Activated naive CD4-positive, alpha-beta T cell treated with anti-CD3 and anti-CD28 coated beads for 36 hours (primary cell): ENCODE measurements at regions of chr1 and their contacts with region 1.

Region 1: DNA sequence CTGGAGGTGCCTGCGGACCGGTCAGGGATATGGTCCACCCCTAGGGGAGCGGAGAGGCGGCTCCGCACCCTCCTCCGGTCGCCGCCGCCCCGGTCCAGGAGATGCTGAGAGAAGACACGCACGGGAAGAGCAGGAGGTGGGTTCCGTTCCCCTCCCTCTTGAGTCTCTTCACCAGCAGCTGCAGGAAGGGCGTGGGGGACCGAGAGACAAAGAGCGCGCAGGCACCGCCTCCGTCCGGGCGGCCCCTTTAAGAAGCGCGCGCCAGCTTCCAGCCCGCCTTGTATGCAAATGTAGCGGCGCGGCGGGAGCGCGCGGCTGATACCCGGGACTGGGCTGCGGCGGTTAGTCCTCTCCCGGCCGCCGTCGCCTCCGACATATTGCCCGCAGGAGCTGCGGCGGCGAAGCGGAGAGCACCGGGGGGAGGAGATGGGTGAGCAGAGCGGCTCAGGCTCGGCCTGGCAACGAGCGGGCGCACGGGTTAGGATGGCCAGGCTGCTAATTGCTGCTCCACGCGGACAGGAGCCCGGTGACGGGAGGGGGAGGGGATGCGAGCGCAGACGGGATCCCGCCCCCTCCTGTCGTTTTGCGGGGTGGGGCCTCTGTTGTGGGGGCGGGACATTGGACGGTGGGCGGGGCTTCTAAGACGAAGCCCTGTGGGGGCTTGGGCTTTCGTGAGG is at the start of gene TMEM39B:
- DNase-seq: peak; percentile 95
- H3K4me3 Mint-ChIP-seq: peak within 1 kb of the TSS; percentile 87
- H3K27ac Mint-ChIP-seq: peak within 1 kb of the TSS; percentile 85
- H3K4me1 Mint-ChIP-seq: peaks cover 32% of the 10 kb centered on the region
- H3K27me3 Mint-ChIP-seq: no peaks in the 10 kb centered on the region
- total RNA-seq, gene TMEM39B: 17.2 to 17.6 TPM

Region 2: GRCh38 chr1:31762726-31763670 is 309.8 kb before region 1 on chr1:
- CTCF ChIA-PET with region 1: no interaction called
- intact Hi-C with region 1: loop called (anchors 5 kb)
- DNase-seq: peak; percentile 80
- H3K4me3 Mint-ChIP-seq: peak overlapping the region; percentile 67
- H3K27ac Mint-ChIP-seq: no peak overlapping the region
- H3K4me1 Mint-ChIP-seq: peaks cover 20% of the 10 kb centered on the region
- H3K27me3 Mint-ChIP-seq: peaks cover 18% of the 10 kb centered on the region

Region 3: DNA sequence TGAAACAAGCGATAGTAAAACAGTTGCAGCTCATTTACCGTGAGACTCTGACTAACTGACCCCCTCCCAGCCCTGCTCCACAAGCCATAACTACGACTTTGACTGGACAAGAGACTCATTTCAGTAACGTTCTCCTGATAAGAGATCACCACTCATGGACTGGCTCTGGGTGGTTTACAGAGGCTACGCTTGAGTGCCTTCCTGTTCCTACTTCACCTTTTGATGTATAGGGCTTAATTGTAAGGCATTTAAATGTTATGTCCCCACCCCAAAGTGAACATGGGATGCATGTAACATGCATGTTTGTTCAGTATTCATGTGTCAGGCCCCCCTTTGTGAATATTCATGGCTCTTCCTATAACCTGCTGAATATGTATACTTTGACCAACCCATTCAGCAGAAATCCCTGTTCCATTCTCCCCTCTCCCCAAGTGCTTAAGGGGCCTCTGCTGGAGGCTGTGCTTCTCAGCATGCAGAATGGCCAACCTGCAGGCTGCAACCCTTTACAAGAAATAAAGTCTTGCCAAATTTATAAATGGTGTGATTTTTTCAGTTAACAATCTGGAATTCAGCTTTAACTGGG is 206.2 kb before region 1 on chr1:
- CTCF ChIA-PET with region 1: no interaction called
- intact Hi-C with region 1: no loop called
- DNase-seq: no peak
- H3K4me3 Mint-ChIP-seq: no peak overlapping the region
- H3K27ac Mint-ChIP-seq: no peak overlapping the region
- H3K4me1 Mint-ChIP-seq: peaks cover 10% of the 10 kb centered on the region
- H3K27me3 Mint-ChIP-seq: no peaks in the 10 kb centered on the region

Region 4: DNA sequence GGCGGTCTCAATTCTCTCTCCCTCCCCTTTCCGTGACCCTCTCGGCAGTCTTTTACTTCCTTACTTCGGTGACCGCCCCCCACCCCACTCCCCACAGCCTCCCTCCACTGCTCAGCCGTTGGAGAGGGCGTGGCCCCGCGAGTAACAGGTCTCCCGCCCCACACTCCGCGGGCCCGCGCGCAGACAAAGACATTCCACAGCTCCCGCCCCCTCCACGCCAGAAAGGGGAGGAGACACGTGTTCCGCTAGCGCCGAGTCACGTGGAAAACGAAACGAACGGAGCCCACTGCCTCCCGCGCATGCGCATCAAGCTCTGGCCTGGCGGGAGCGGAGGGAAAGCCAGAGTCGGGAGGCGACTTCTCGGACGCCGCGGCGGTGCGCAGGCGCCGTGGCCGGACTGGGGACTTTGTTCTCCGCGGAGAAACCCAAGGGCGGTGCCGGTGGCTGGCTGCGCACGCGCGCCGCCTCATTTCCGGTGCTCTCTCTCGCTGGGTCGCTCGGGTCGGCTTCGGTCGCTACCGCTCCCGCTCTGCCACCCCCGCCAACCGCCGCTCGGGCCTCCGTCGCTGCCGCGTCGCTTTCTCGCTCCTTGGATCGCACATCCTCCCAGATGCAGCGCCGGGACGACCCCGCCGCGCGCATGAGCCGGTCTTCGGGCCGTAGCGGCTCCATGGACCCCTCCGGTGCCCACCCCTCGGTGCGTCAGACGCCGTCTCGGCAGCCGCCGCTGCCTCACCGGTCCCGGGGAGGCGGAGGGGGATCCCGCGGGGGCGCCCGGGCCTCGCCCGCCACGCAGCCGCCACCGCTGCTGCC is 59.2 kb before region 1 on chr1 and contains the start of gene KHDRBS1:
- CTCF ChIA-PET with region 1: no interaction called
- intact Hi-C with region 1: loop called (anchors 1 kb)
- DNase-seq: peak; percentile 98
- H3K4me3 Mint-ChIP-seq: peak within 1 kb of the TSS; percentile 94
- H3K27ac Mint-ChIP-seq: peak within 1 kb of the TSS; percentile 94
- H3K4me1 Mint-ChIP-seq: peaks cover 33% of the 10 kb centered on the region
- H3K27me3 Mint-ChIP-seq: no peaks in the 10 kb centered on the region
- total RNA-seq, gene KHDRBS1: 189 to 198 TPM

Region 5: GRCh38 chr1:32179443-32180185 is 106.9 kb after region 1 on chr1 and contains the start of gene TXLNA:
- CTCF ChIA-PET with region 1: no interaction called
- intact Hi-C with region 1: loop called (anchors 1 kb)
- DNase-seq: peak; percentile 94
- H3K4me3 Mint-ChIP-seq: peak within 1 kb of the TSS; percentile 86
- H3K27ac Mint-ChIP-seq: peak within 1 kb of the TSS; percentile 96
- H3K4me1 Mint-ChIP-seq: peaks cover 47% of the 10 kb centered on the region
- H3K27me3 Mint-ChIP-seq: no peaks in the 10 kb centered on the region
- total RNA-seq, gene TXLNA: 84.3 to 86.2 TPM

Region 6: DNA sequence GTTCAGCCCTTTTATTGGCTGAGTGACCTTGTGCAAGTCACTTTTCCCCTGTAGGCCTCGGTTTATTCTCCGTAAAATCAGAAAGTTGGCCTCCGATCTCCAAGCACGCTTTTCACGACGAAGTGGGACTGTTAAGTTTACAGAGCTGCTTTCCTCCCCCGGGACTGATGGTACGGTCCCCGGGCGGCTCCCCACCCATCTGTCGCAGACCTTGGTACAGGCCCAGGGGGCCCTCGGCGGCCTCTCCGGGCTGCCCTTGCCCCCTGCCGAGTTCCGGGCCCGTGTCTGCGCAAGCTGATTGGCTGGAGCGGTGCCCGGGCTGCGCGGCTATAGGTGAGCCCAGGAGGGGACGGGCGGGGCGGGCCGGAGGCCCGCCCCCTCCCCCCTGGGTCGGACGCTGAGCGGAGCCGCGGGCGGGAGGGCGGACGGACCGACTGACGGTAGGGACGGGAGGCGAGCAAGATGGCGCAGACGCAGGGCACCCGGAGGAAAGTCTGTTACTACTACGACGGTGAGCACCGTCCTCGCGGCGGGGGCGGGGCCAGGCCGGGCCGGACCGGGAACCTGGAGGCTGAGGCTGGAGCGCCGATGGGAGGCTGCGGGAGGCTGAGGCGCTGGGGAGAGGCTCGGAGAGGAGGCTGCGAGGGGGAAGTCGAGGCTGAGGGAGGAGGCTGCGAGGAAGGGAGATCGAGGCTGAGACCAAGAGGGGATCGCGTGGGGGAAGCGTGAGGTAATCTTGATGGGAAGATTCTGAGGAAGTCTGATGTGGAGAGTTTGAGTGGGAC is 219.1 kb after region 1 on chr1 and contains the start of gene HDAC1:
- CTCF ChIA-PET with region 1: no interaction called
- intact Hi-C with region 1: loop called (anchors 2 kb)
- DNase-seq: peak; percentile 97
- H3K4me3 Mint-ChIP-seq: peak within 1 kb of the TSS; percentile 100
- H3K27ac Mint-ChIP-seq: peak within 1 kb of the TSS; percentile 98
- H3K4me1 Mint-ChIP-seq: peaks cover 48% of the 10 kb centered on the region
- H3K27me3 Mint-ChIP-seq: no peaks in the 10 kb centered on the region
- total RNA-seq, gene HDAC1: 111 to 120 TPM

Region 7: DNA sequence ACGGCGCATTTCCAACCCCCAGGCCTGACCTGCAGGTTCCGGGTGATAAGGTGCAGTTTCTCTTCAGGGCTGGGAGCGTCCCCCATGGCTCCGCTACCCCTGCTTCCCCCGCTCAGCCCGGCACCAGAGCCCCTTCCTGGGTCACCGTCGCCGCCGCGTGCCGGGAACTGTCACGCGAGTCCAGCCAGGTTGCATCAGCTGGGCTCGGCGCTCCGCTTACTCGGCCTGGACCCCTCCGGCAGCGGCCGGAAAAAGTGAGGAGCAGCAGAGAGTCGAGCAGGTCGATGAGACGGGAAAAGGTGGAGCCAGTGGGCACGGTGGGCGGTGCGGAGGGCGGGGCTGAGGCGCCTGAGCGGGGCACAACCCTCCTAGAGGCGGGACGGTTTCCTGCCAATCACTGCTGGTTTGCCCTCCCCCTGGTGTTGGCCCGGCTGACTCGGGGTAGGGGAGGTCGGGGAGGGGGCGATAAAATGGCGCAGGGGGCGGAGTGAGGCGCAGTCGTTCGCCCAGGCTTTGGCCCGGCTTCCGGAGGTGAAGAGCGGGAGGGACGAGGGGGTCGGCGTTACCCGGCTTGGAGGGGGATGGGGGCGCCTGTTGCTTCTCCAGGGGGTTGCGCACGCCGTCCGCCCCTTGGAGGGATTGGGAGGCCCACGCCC is 744.5 kb after region 1 on chr1 and contains the starts of genes S100PBP and YARS1:
- CTCF ChIA-PET with region 1: no interaction called
- intact Hi-C with region 1: loop called (anchors 2 kb)
- DNase-seq: peak; percentile 100
- H3K4me3 Mint-ChIP-seq: peak within 1 kb of the TSS; percentile 92
- H3K27ac Mint-ChIP-seq: peak within 1 kb of the TSS; percentile 94
- H3K4me1 Mint-ChIP-seq: peaks cover 51% of the 10 kb centered on the region
- H3K27me3 Mint-ChIP-seq: no peaks in the 10 kb centered on the region
- total RNA-seq, gene S100PBP: 26.1 to 31.2 TPM
- total RNA-seq, gene YARS1: 293 to 312 TPM